Spleen (tissue), 13 donors: ENCODE measurements at regions of chr5 and their contacts with region 1.

Region 1: GRCh38 chr5:61603211-61603908 is 271.3 kb downstream of the ZSWIM6 start:
- DNase-seq: no peak
- H3K4me3 ChIP-seq: no peak overlapping the region
- H3K27ac ChIP-seq: no peak overlapping the region
- H3K4me1 ChIP-seq: no peaks in the 10 kb centered on the region
- H3K27me3 ChIP-seq: peaks cover 0 to 3% (median 0%) of the 10 kb centered on the region in 7 donors
- CTCF ChIP-seq: no peak
- POLR2A ChIP-seq: no peak

Region 2: DNA sequence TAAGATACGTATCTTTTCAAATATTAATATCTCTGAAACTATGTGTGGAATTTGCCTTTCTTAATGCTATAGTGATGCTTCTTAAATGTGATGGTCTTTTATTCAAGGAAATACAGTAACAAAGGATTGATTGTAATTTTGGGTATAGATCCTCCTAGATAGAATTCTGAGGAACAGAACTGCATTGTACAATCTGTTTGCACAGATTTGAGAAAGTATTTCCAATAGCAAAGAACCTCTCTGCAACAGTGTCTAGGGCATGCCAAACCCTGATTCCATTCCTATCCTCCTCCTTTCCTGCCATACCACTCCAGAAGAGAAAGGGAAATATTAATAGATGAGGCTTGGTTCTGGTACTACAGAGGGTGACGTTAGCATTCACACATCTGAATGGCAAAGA is 451.5 kb before region 1 on chr5:
- intact Hi-C with region 1: loop called (anchors 5 kb)
- DNase-seq: no peak
- H3K4me3 ChIP-seq: no peak overlapping the region
- H3K27ac ChIP-seq: no peak overlapping the region
- H3K4me1 ChIP-seq: no peaks in the 10 kb centered on the region
- H3K27me3 ChIP-seq: no peaks in the 10 kb centered on the region
- CTCF ChIP-seq: no peak
- POLR2A ChIP-seq: no peak